ENCODE measurements at regions of chr7 and their contacts with region 1.

Region 1: GRCh38 chr7:3005257-3005656 is 38.4 kb downstream of the CARD11 start:
- DNase-seq: peak in 1 of 2 experiments; percentile 75
- H3K4me3 ChIP-seq: no peak overlapping the region
- H3K27ac ChIP-seq: peak overlapping the region; percentile 31; the same call in 1 of the 2 replicates
- H3K4me1 ChIP-seq: peaks cover 12% of the 10 kb centered on the region
- H3K27me3 ChIP-seq: no peaks in the 10 kb centered on the region
- CTCF ChIP-seq: no peak

Region 2: GRCh38 chr7:3021825-3022224 is 16.6 kb after region 1 on chr7:
- CTCF ChIA-PET with region 1: no interaction called
- POLR2A ChIA-PET with region 1: no interaction called
- intact Hi-C with region 1: loop called (anchors 2 kb)
- DNase-seq: no peak
- H3K4me3 ChIP-seq: no peak overlapping the region
- H3K27ac ChIP-seq: no peak overlapping the region
- H3K4me1 ChIP-seq: no peaks in the 10 kb centered on the region
- H3K27me3 ChIP-seq: no peaks in the 10 kb centered on the region
- CTCF ChIP-seq: no peak

Region 3: GRCh38 chr7:3922175-3922635 is 916.9 kb after region 1 on chr7:
- CTCF ChIA-PET with region 1: no interaction called
- POLR2A ChIA-PET with region 1: no interaction called
- intact Hi-C with region 1: no loop called
- DNase-seq: peak; percentile 3 to 76
- H3K4me3 ChIP-seq: no peak overlapping the region
- H3K27ac ChIP-seq: no peak overlapping the region
- H3K4me1 ChIP-seq: no peaks in the 10 kb centered on the region
- H3K27me3 ChIP-seq: peaks cover 74% of the 10 kb centered on the region
- CTCF ChIP-seq: peak; percentile 22; the same call in 1 of the 2 replicates